Posterior cingulate gyrus (tissue), 11 donors: ENCODE measurements at regions of chr17 and their contacts with region 1.

Region 1: GRCh38 chr17:82668631-82669099 is 20.4 kb upstream of the WDR45B start:
- DNase-seq: peak; percentile 54 to 97 (median 70)

Region 2: DNA sequence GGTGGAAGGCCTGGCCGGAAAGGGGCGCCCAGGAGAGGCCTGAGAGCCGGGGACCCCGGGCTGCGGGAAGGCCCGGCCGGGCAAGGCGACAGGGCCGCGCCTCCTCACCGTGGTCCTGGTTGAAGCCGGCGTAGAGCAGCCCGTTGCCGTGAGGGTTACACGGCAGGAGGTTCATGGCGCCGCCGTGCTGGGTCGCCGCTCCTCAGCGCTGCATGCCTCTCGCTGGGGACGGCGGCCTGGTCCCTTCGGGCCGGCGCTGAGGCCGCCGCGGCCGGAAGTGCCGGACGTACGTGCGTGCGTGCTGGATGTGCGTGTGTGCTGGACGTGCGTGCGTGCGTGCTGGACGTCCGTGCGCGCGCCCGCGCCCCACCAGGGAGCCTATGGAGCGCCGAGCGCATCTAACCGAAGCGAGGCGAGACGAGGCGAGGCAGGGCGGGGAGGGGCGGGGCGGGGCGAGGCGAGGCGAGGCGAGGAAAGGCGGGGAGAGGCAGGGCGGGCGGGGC is 20.4 kb before region 1 on chr17 and contains the start of gene WDR45B:
- intact Hi-C with region 1: no loop called
- DNase-seq: peak; percentile 87 to 100 (median 94)

Region 3: GRCh38 chr17:82698065-82698973 is 29.7 kb after region 1 on chr17 and contains the start of gene RAB40B:
- intact Hi-C with region 1: loop called (anchors 5 kb)
- DNase-seq: peak; percentile 99 to 100 (median 100)

Region 4: DNA sequence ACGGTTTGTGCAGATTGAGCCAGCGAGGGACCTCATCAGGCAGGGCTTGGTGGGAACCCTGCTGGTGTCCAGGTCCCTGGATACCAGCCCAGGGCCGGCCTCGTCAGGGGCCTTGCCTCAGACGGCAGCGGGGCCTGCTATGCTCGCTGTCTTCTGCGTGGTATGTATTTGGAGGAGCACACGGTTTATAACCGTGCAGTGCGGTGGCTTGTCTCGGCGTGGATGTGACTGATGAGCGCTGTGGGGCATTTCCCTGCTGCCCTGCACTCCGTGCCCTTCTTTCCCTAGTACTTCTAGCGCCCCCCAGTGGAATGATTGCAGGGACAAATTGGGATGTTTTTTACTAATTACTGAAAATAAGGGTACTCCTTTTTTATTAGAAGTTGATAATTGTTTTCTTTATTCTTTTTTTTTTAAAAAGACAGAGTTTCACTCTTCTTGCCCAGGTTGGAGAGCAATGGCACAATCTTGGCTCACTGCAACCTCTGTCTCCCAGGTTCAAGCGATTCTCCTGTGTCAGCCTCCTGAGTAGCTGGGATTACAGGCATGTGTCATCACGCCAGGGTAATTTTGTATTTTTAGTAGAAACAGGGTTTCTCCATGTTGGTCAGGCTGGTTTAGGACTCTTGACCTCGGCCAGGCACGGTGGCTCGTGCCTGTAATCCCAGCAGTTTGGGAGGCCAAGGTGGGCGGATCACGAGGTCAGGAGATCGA is 98.5 kb after region 1 on chr17:
- intact Hi-C with region 1: loop called (anchors 1 kb)
- DNase-seq: peak in 8 of 10 donors; percentile 48 to 91 (median 72)

Region 5: GRCh38 chr17:82808921-82809905 is 140.5 kb after region 1 on chr17:
- intact Hi-C with region 1: no loop called
- DNase-seq: peak in 3 of 10 donors; percentile 65 to 86 (median 70)